Activated T-helper 1 cell treated with anti-CD3 and anti-CD28 coated beads, Interleukin-12 subunit alpha, Interleukin-12 subunit beta, Interleukin-2, Interleukin-4 antibody, amounts not matched to agents 30 ng/mL and 10 ng/mL and 1 ng/mL, durations not matched to agents 14 hours and 24 hours and 36 hours (primary cell): ENCODE measurements at regions of chr10 and their contacts with region 1.

Region 1: DNA sequence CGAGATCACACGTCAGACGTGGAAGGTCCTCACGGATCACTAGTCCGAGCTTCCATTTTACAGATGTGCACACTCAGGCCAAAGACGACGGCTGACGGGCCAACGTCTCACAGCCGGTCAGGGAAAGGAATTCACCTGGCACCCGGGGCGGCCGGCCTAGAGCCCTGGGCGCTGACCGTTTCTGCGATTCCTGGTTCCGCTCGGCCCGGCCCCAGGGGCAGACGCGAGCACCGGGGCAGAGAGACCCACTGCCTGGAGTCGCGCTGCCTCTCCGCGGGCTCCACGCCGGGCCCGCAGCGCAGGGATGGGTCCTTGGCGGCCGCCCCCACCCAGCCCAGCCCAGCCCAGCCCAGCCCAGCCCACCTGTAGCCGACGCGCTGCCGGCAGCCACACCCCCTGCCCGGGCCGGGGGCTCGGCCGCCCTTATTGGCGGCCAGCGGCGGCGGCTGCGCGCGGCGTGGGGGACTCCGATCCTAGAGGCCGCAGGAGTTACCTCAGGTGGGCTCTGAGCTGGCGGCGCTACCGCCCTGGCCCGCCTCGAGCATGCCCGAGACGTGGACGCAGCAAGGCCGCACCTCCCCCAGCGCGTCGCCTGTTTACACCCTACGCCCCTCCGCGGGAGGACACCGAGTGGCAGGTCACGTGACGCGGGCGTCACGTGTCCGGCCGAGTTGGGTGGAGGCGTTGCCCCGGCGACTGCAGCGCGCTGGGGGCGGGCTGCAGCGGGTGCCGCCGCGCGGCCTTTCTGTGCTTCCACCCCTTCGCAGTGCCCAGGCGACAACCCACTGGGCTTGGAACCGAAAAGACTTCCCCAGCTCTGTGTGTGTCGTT is 78.1 kb downstream of the ZFAND4 start:
- DNase-seq: peak; percentile 89
- H3K4me3 Mint-ChIP-seq: peak overlapping the region; percentile 90
- H3K27ac Mint-ChIP-seq: peak overlapping the region; percentile 81
- H3K4me1 Mint-ChIP-seq: peaks cover 40% of the 10 kb centered on the region
- H3K27me3 Mint-ChIP-seq: peaks cover 20% of the 10 kb centered on the region

Region 2: GRCh38 chr10:45235798-45236231 is 358.7 kb before region 1 on chr10:
- intact Hi-C with region 1: loop called (anchors 5 kb)
- DNase-seq: no peak
- H3K4me3 Mint-ChIP-seq: no peak overlapping the region
- H3K27ac Mint-ChIP-seq: no peak overlapping the region
- H3K4me1 Mint-ChIP-seq: peaks cover 14% of the 10 kb centered on the region
- H3K27me3 Mint-ChIP-seq: peaks cover 2% of the 10 kb centered on the region

Region 3: DNA sequence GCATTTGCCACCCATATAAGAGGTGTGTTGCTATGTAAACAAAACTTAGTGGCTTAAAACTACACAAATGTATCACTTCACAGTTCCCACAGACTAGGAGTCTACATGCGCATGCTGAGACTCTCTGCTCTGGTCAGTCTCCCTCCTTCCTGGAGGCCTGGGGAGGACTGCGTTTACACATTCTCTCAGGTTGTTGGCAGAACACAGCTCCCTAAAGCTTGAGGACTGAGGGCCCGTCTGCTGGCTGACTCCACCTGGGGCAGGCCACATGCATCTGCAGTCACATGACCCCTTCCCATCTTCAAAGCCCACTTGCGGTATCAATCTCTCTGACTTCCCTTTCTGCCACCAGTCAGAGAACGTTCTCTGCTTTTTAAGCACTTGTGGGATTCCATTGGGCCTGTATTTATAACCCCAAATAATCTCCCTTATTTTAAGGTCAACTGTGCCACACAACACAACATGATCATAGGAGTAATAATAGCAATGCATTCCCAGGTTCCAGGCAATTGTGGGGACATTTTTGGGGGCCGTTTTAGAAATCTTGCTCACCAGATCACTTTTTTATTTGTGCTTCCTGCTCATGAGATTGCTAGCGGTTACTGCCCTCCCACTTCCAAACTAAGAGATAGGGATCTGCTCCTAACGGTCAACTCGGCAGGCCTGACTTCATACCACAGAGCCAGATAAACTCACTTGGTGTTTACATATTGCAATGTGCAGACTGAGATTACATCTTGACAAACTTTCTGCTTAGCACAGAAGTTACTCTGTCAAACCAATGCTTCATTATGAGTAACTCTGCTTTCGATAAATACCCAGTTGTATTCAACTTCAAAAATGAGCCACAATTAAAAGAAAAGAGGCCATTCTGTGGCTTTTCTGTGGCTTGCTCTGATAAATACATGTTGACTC is 124.1 kb before region 1 on chr10:
- intact Hi-C with region 1: loop called (anchors 1 kb)
- DNase-seq: peak; percentile 17
- H3K4me3 Mint-ChIP-seq: peak overlapping the region; percentile 27
- H3K27ac Mint-ChIP-seq: peak overlapping the region; percentile 69
- H3K4me1 Mint-ChIP-seq: peaks cover 21% of the 10 kb centered on the region
- H3K27me3 Mint-ChIP-seq: no peaks in the 10 kb centered on the region

Region 4: DNA sequence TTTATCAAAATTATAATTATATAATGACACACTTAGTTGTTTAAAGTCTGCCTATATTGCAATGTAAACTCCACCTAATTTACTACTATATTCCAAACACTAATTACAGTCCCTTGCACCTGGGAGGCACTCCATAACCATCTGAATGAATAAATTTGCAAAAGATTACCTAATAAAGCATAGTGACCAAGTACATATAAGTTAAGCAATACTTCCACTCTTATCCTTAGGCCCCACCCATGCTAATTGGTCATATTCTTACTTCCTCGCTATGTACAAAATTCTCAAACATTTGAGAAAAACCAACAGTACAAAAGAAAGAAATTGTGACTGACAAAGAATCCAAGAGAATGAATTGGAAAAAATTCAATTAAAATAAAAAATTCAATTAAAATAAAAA is 12.8 kb after region 1 on chr10:
- intact Hi-C with region 1: no loop called
- DNase-seq: no peak
- H3K4me3 Mint-ChIP-seq: no peak overlapping the region
- H3K27ac Mint-ChIP-seq: no peak overlapping the region
- H3K4me1 Mint-ChIP-seq: no peaks in the 10 kb centered on the region
- H3K27me3 Mint-ChIP-seq: peaks cover 4% of the 10 kb centered on the region

Region 5: DNA sequence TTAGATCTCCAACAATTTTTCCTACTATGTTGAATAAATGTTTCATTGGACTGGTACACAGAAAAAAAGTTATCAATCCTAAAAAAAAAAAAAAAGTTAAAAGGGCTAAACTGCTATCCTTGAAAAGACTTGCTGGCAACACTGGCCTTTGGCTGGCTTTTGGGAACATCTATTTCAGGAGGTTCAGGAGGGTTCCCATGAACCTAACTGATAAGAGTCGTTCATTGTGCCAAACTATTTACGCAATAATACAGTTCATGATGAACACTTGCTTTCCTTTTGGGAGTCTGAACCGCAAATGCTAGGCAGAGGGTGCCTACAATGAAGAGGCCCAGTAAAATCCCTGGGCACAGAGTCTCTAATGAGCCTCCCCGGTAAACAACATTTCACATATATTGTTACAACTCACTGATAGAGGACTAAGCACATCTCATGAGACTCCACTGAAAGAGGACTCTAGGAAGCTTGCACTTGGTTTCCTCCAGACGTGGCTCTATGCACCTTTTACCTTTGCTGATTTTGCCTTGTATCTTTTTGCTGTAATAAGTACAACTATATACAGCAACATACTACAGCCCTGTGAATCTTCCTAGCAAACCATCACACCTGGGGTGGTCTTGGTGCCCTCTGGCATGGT is 33.0 kb after region 1 on chr10:
- intact Hi-C with region 1: loop called (anchors 5 kb)
- DNase-seq: no peak
- H3K4me3 Mint-ChIP-seq: no peak overlapping the region
- H3K27ac Mint-ChIP-seq: no peak overlapping the region
- H3K4me1 Mint-ChIP-seq: no peaks in the 10 kb centered on the region
- H3K27me3 Mint-ChIP-seq: no peaks in the 10 kb centered on the region